Activated CD4-positive, alpha-beta memory T cell treated with anti-CD3 and anti-CD28 coated beads for 36 hours (primary cell): ENCODE measurements at regions of chr18 and their contacts with region 1.

Region 1: DNA sequence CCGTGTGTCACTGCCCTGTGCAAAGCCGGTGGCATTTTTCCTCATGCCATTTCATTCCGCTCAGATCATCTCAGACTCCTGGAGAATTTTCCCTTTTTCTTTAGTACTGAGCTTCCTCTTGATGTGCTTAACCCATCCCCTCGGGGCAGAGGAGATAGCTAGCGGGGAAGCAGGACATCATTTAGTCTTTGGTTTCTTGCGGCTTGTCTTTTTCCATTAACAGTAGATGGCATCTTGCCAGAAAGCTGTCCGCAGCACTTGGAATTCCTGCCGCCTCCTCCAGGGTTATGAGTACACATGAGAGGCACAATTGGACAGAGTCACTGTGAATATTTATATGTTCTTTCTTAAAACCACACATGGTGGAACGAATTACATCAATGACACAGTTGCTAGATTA is 226.6 kb downstream of the ALPK2 start:
- DNase-seq: no peak
- H3K4me3 Mint-ChIP-seq: no peak overlapping the region
- H3K27ac Mint-ChIP-seq: no peak overlapping the region
- H3K4me1 Mint-ChIP-seq: peaks cover 15% of the 10 kb centered on the region
- H3K27me3 Mint-ChIP-seq: peaks cover 2% of the 10 kb centered on the region

Region 2: GRCh38 chr18:58043491-58044379 is 358.5 kb before region 1 on chr18 and contains the start of gene NEDD4L:
- CTCF ChIA-PET with region 1: no interaction called
- POLR2A ChIA-PET with region 1: no interaction called
- intact Hi-C with region 1: no loop called
- DNase-seq: peak; percentile 89
- H3K4me3 Mint-ChIP-seq: peak within 1 kb of the TSS; percentile 86
- H3K27ac Mint-ChIP-seq: peak within 1 kb of the TSS; percentile 26
- H3K4me1 Mint-ChIP-seq: peaks cover 20% of the 10 kb centered on the region
- H3K27me3 Mint-ChIP-seq: peaks cover 25% of the 10 kb centered on the region
- total RNA-seq, gene NEDD4L: 3.4 to 3.8 TPM

Region 3: GRCh38 chr18:58097121-58097906 is 304.9 kb before region 1 on chr18:
- CTCF ChIA-PET with region 1: no interaction called
- POLR2A ChIA-PET with region 1: no interaction called
- intact Hi-C with region 1: no loop called
- DNase-seq: no peak
- H3K4me3 Mint-ChIP-seq: no peak overlapping the region
- H3K27ac Mint-ChIP-seq: no peak overlapping the region
- H3K4me1 Mint-ChIP-seq: no peaks in the 10 kb centered on the region
- H3K27me3 Mint-ChIP-seq: peaks cover 2% of the 10 kb centered on the region

Region 4: GRCh38 chr18:58276789-58277739 is 125.2 kb before region 1 on chr18:
- CTCF ChIA-PET with region 1: no interaction called
- POLR2A ChIA-PET with region 1: no interaction called
- intact Hi-C with region 1: no loop called
- DNase-seq: no peak
- H3K4me3 Mint-ChIP-seq: no peak overlapping the region
- H3K27ac Mint-ChIP-seq: no peak overlapping the region
- H3K4me1 Mint-ChIP-seq: peaks cover 10% of the 10 kb centered on the region
- H3K27me3 Mint-ChIP-seq: no peaks in the 10 kb centered on the region

Region 5: DNA sequence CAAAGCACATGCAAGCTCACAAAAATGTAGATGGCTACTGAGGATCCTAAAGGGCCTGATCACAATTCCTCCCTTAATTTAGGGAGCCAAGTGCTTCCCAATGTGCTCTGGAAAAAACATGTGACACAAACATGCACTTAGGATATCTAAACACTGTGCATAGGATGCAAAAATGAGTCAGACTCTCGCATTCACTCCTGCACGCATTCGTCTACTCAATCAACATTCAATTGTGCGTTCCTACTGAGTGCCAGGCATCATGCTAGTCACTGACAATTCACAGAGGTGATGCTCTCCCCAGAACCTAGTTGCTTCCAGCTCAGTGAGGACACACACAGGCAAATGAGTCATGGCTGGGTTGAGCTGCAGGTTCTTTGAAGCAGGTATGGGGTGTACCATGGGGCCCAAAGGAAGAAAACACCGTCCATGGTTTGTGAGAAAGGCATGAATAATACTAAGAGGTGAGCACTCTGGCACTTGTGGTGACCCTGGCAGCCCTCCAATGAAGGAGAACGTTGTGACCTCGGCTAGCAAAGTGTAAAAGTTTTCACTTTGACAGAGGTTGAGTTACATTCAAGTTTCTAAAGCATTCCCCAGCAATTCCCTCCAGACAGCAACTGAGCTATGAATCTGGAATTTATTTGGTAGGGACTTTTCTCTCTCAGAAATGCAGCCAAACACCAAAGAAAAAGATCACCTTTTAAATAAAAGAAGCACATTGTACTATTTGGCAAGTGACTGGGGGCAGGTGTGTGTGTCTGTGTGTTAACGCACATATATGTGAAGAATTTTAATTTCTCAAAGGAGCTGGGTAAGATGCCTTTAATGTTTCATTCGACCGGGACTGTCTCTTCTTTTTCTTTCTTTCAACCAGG is 53.3 kb after region 1 on chr18:
- CTCF ChIA-PET with region 1: no interaction called
- POLR2A ChIA-PET with region 1: no interaction called
- intact Hi-C with region 1: loop called (anchors 5 kb)
- DNase-seq: peak; percentile 56
- H3K4me3 Mint-ChIP-seq: no peak overlapping the region
- H3K27ac Mint-ChIP-seq: no peak overlapping the region
- H3K4me1 Mint-ChIP-seq: peaks cover 2% of the 10 kb centered on the region
- H3K27me3 Mint-ChIP-seq: peaks cover 3% of the 10 kb centered on the region

Region 6: DNA sequence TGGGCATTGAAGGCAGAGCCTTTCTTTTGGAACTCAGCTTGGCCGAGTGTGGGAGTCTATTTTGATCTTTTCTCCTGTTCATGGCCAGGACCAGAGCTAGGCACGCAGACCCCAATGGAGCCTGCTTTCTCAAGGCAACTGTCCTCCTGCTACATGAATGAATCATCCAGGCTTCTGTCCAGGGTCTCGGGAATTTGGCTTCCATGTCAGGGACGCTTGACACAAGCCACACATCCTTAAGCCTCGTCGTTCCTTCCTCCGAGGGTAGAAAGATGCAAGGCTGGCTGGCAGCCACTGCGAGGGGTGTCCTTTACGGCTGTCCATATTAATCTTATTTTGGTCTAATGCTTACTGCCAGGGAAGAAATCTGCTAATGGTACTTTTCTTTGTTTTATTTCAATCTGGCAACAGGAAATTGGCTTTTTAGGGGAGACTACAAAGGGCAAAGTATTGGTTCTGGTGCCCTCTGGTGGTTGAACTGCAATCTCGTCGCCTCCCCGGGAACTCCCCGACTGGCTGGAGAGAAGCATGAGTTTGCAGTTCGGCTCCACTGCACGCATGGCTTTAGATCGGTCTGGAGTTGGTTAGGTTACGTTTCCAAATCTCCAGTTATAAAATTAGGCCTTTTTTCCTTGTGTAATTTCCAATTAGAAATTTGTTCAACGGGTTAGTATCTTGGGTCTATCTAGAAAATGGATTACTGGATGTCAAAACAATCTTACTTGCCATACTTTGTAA is 91.4 kb after region 1 on chr18:
- CTCF ChIA-PET with region 1: interaction called, 3 read pairs
- POLR2A ChIA-PET with region 1: no interaction called
- intact Hi-C with region 1: loop called (anchors 1 kb)
- DNase-seq: peak; percentile 85
- H3K4me3 Mint-ChIP-seq: no peak overlapping the region
- H3K27ac Mint-ChIP-seq: peak overlapping the region; percentile 11
- H3K4me1 Mint-ChIP-seq: peaks cover 6% of the 10 kb centered on the region
- H3K27me3 Mint-ChIP-seq: peaks cover 30% of the 10 kb centered on the region